PC-9 (cell line): ENCODE measurements at regions of chr9 and their contacts with region 1.

Region 1: DNA sequence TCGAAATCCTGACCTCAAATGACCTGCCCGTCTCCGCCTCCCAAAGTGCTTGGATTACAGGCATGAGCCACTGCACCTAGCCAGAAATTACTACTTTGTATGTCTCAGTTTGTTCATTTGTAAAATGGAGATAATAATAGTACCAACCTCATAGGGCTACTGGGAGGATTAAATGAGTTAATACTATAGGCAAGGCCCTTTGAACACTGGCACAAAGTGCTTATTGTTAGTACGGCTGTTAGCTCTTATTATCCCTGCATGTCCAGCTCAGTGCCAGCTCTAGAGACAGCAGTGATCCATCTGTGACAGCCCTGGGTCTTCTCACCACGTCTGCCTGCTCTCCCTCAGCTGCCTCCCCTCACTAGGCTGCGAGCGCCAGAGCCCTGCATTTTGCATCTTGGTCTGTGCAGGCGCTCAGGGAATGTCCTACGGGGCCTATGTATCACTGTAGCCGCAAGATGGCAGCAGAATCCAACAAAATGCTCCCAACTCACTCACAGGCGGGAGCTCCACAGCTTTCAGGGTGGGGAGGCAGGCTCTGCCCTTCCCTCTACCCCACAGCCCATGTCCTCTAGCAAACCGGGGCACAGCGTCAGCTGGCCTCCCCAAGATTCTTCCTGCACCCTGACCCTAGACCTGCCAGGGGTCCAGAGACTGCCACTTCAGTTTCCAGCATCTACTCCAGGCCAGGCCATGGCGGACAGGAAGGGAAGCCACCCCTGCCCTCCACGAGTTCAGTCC is 17.7 kb upstream of the AKNA start:
- DNase-seq: peak; percentile 59 to 76
- H3K4me3 ChIP-seq: no peak overlapping the region
- H3K27ac ChIP-seq: no peak overlapping the region
- H3K4me1 ChIP-seq: no peaks in the 10 kb centered on the region
- H3K27me3 ChIP-seq: no peaks in the 10 kb centered on the region
- CTCF ChIP-seq: peak; percentile 82

Region 2: DNA sequence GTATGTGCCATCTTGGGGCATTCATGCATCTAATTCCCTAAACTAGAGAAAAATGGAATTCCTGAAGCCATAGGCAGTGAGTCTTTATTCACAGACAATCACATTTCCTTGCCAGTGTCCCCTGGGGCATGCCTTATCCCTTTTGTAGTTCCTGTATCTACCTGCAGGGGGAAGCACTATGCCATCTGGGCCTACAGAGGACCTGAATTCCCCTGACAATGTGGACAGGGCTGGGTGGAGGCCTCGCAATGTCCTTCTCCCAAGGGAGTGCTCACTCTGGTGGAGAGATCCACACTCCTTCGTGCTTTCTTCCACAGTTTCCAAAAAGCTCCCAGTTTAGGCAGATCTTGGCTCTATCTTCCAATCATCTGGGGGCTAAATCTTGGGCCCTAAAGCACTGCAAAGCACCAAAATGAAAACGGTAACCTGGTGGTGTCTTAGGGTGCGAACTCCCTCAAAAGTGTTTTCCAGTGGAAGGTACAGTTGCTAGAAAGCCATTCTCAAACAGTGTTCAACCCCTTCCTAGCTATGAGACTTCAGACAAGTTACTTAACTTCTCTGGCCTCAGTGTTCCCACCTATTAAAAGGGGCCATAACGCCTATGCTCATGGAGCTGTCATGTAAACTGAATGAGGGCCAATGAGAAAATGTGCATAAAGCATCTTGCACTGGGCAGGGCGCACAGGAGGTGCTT is 82.3 kb after region 1 on chr9:
- CTCF ChIA-PET with region 1: interaction called, 3 read pairs
- POLR2A ChIA-PET with region 1: no interaction called
- intact Hi-C with region 1: loop called (anchors 5 kb)
- DNase-seq: peak; percentile 66 to 71
- H3K4me3 ChIP-seq: no peak overlapping the region
- H3K27ac ChIP-seq: no peak overlapping the region
- H3K4me1 ChIP-seq: peaks cover 37% of the 10 kb centered on the region
- H3K27me3 ChIP-seq: no peaks in the 10 kb centered on the region
- CTCF ChIP-seq: peak; percentile 93

Region 3: GRCh38 chr9:114587385-114588202 is 182.1 kb after region 1 on chr9 and contains the start of gene ATP6V1G1:
- CTCF ChIA-PET with region 1: interaction called, 4 read pairs
- POLR2A ChIA-PET with region 1: no interaction called
- intact Hi-C with region 1: loop called (anchors 1 kb)
- DNase-seq: peak; percentile 97 to 99
- H3K4me3 ChIP-seq: peak within 1 kb of the TSS; percentile 78
- H3K27ac ChIP-seq: peak within 1 kb of the TSS; percentile 82
- H3K4me1 ChIP-seq: peaks cover 20% of the 10 kb centered on the region
- H3K27me3 ChIP-seq: no peaks in the 10 kb centered on the region
- CTCF ChIP-seq: no peak
- total RNA-seq, gene ATP6V1G1: 81.9 and 90.6 TPM in 2 replicates

Region 4: DNA sequence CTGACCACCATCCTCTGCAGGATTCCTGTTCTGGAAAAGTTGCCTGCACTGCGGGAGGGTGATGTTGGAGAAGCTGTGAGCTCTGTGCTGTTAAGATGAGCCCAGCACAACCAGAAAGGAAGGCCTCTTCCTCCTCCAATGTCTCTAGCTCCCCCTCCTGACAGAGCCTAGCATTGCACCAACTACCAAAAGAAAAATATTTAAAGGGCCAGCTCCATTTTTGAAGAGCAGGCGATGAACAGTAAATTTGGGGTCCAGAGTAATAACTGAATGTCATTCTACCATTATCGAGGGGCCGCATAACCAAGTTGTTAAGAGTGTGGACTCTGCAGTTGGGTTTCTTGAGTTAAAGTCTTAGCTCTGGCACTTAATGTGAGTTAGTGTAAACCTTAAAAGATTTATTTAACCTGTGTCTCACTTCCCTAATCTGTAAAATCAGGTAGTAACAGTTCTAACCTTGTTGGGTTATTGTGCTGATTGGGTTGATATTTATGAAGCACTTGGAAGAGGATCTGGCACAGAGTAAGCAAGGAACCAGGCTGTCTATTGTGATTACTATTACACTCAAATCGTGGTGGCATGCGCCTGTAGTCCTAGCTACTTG is 248.2 kb after region 1 on chr9:
- CTCF ChIA-PET with region 1: interaction called, 27 read pairs
- POLR2A ChIA-PET with region 1: no interaction called
- intact Hi-C with region 1: loop called (anchors 1 kb)
- DNase-seq: peak; percentile 60 to 79
- H3K4me3 ChIP-seq: no peak overlapping the region
- H3K27ac ChIP-seq: no peak overlapping the region
- H3K4me1 ChIP-seq: no peaks in the 10 kb centered on the region
- H3K27me3 ChIP-seq: no peaks in the 10 kb centered on the region
- CTCF ChIP-seq: peak; percentile 93

Region 5: DNA sequence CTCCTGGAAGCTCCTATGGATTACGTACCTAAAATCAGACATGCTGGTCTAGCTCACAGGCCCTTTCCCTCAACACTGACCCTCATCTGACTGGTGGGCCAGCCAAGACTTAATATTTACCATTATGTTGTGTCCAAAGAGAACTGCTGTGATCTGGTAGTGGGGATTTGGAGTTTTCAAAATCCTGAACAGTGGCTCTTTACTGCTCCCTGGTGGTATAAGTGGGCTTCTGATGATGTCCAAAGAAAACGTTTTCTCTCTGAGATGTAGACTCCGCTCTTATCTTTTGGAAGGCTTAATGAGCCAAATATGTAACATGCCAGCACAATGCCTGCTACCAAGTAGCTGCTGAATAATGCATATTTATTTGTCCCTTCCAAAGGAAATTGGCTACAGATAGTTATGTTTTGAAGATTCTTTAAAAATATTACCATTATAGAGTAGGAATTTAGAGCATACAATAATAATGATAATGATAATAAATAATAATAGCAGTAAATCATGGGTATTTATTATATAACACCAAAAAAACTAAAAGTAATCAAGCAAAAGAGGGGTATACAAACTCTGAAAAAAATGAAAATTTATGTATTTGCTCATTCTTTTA is 1119.1 kb after region 1 on chr9:
- CTCF ChIA-PET with region 1: no interaction called
- POLR2A ChIA-PET with region 1: no interaction called
- intact Hi-C with region 1: loop called (anchors 10 kb)
- DNase-seq: peak; percentile 30 to 60
- H3K4me3 ChIP-seq: no peak overlapping the region
- H3K27ac ChIP-seq: no peak overlapping the region
- H3K4me1 ChIP-seq: no peaks in the 10 kb centered on the region
- H3K27me3 ChIP-seq: no peaks in the 10 kb centered on the region
- CTCF ChIP-seq: peak; percentile 84